Activated CD4-positive, alpha-beta memory T cell treated with anti-CD3 and anti-CD28 coated beads for 36 hours (primary cell): ENCODE measurements at regions of chr1 and their contacts with region 1.

Region 1: DNA sequence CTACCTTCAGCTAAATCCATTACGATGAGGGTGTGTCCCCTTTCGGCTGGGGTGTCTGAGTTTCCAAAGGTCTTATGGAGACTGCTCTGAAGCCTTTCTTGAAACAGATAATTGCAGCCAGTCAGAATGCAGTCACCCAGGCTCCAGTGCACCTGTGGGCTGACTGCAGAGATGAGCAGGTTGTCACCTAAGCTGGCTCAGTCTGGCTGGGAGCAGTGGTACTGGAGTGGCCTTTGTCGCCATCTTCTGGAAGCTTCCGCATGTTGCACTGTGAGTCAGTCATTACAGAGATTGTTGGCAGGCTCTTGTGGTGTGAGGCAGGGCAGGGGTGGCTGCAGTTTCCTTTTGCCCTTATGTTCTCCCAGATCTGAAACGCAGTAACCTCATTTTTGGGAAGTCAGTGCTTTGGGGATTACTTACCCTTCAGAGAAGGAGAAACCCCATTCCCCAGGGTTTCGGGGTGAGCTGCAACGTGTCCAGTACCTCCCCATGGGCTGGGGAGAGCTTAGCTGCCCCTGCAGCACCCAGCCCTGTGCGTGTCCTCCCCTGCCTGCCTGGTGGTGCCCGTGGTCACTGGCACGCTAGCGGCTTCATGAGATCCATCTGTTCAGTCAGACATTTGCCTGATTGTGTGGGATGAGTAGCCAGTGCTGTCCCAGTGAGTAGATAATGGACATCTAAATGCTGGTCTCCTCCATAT is 48.0 kb downstream of the SMYD2 start:
- DNase-seq: peak; percentile 88
- H3K4me3 Mint-ChIP-seq: no peak overlapping the region
- H3K27ac Mint-ChIP-seq: no peak overlapping the region
- H3K4me1 Mint-ChIP-seq: no peaks in the 10 kb centered on the region
- H3K27me3 Mint-ChIP-seq: no peaks in the 10 kb centered on the region

Region 2: GRCh38 chr1:213374369-213374768 is 954.6 kb before region 1 on chr1:
- CTCF ChIA-PET with region 1: no interaction called
- POLR2A ChIA-PET with region 1: no interaction called
- intact Hi-C with region 1: loop called (anchors 10 kb)
- DNase-seq: peak; percentile 68
- H3K4me3 Mint-ChIP-seq: no peak overlapping the region
- H3K27ac Mint-ChIP-seq: no peak overlapping the region
- H3K4me1 Mint-ChIP-seq: no peaks in the 10 kb centered on the region
- H3K27me3 Mint-ChIP-seq: no peaks in the 10 kb centered on the region

Region 3: DNA sequence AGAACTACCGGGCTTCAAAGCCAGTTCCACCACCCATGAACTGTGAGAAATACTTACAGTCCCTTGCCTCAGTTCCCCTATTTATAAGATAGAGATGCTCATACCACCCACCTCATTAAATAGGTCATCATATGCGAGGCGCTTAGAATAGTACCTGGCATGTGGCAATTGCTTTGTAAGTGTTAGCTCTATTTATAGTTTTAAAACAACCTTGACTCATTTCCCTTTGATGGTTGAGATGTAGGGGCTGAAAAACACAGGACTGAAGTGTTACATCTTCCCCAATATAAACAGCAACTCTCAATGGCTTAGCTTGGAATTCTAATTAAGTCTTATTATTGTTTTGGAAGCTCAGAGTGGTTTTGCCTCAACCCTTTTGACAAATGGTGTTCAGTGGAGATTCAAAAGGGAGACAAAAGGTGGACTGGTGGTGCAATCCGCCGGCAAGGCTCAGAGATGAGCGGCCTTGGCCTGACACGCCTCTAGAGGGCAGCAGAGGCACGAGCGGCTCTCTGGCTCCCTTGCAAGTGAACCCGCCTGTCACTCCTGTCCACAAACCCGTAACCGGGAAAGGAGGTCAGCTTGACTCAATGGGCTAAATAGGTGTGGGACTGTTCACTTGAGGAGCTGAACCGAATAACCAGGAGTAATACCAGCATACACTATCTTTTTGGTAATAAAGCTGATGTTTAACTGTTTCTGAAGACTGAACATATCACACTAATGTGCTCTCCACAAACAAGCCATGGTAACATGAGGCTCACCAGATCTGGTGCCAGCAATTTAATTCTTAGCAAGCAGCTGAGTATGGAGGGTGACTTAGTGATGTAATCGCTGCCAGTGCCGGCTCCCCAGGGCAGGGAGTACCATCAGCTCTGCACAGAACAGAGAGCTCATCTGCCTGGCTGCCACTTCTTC is 67.5 kb before region 1 on chr1:
- CTCF ChIA-PET with region 1: interaction called, 491 read pairs
- POLR2A ChIA-PET with region 1: interaction called, 4 read pairs
- intact Hi-C with region 1: loop called (anchors 1 kb)
- DNase-seq: peak; percentile 87
- H3K4me3 Mint-ChIP-seq: no peak overlapping the region
- H3K27ac Mint-ChIP-seq: no peak overlapping the region
- H3K4me1 Mint-ChIP-seq: peaks cover 13% of the 10 kb centered on the region
- H3K27me3 Mint-ChIP-seq: peaks cover 52% of the 10 kb centered on the region

Region 4: DNA sequence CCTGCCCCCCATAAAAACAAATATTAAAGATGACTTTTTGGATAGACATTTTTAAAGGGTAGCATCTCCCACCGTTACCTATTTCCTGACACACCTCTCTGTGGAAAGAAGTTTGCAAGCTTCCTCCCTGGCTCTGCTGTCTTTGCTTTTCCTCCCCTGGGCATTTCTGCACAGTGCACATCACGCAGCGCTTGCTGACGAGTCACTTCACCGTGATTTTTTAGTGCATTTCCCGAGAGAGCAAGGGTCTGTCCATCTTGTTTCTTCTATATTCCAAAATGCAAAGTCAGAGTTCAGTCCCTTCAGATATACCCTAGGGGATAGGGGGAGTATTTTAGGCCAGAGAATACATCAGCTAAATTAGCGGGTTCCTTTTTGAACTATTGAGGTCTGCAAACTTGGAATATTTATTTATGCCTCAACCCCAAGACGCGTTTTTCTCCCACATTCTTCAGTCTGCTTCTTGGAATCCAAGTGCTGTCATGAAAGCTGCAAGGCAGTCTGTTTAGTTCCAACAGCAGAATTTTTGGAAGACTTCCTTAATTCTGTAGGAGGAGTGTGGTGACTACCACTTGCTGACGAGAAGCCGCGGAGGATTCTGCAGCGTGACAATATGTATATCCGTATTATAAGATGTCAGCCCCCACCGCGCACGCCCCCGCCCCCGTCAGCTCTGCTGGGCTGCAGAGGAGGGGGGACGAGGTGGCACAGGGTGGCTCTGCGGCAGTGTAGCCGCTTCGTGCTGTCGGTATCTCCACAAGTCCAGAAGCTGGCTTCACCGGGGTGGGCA is 25.6 kb before region 1 on chr1:
- CTCF ChIA-PET with region 1: interaction called, 12 read pairs
- POLR2A ChIA-PET with region 1: no interaction called
- intact Hi-C with region 1: no loop called
- DNase-seq: no peak
- H3K4me3 Mint-ChIP-seq: no peak overlapping the region
- H3K27ac Mint-ChIP-seq: no peak overlapping the region
- H3K4me1 Mint-ChIP-seq: peaks cover 14% of the 10 kb centered on the region
- H3K27me3 Mint-ChIP-seq: no peaks in the 10 kb centered on the region

Region 5: DNA sequence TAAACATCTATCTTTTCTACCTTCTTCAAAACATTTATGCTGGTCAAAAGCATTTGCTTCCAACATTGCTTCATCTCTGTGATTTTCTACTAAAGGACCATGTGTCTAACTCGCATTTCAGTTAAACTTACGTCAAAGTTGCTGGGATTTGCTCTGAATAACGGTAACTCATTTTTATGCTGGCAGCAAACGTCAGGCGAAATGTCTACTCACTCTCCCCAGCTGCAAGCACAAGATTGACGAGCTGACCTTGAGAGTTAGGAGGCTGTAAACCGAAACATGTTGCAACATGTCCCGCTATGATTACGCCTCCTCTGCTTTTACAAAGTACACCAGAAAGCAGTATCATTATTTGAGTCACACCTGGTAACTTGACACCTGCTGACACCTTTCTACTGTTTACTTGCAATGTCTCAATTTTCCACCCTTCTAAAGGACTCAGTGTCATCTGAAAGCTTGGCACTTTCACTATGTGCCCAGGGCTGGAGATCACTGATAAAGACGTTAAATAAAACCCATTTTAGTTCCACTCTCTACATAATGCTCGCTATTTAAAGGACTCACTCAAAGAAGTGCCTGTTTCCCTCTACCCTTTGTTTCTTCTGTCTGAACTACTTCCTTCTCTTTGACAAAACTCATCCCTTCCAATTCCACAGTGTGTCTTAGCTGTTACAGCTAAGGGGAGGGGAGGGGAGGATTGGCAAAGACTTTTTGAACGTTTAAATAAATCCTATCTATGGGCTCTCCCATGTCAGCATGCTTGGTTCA is 110.6 kb after region 1 on chr1:
- CTCF ChIA-PET with region 1: interaction called, 4 read pairs
- POLR2A ChIA-PET with region 1: no interaction called
- intact Hi-C with region 1: loop called (anchors 5 kb)
- DNase-seq: peak; percentile 81
- H3K4me3 Mint-ChIP-seq: peak overlapping the region; percentile 44
- H3K27ac Mint-ChIP-seq: peak overlapping the region; percentile 96
- H3K4me1 Mint-ChIP-seq: peaks cover 41% of the 10 kb centered on the region
- H3K27me3 Mint-ChIP-seq: peaks cover 1% of the 10 kb centered on the region

Region 6: GRCh38 chr1:214584805-214585766 is 256.2 kb after region 1 on chr1:
- CTCF ChIA-PET with region 1: interaction called, 209 read pairs
- POLR2A ChIA-PET with region 1: no interaction called
- intact Hi-C with region 1: loop called (anchors 1 kb)
- DNase-seq: no peak
- H3K4me3 Mint-ChIP-seq: no peak overlapping the region
- H3K27ac Mint-ChIP-seq: no peak overlapping the region
- H3K4me1 Mint-ChIP-seq: no peaks in the 10 kb centered on the region
- H3K27me3 Mint-ChIP-seq: peaks cover 7% of the 10 kb centered on the region

Region 7: GRCh38 chr1:215526553-215527151 is 1197.7 kb after region 1 on chr1:
- CTCF ChIA-PET with region 1: interaction called, 6 read pairs
- POLR2A ChIA-PET with region 1: no interaction called
- intact Hi-C with region 1: loop called (anchors 2 kb)
- DNase-seq: no peak
- H3K4me3 Mint-ChIP-seq: no peak overlapping the region
- H3K27ac Mint-ChIP-seq: no peak overlapping the region
- H3K4me1 Mint-ChIP-seq: peaks cover 3% of the 10 kb centered on the region
- H3K27me3 Mint-ChIP-seq: peaks cover 13% of the 10 kb centered on the region